ENCODE measurements at regions of chr4 and their contacts with region 1.

Region 1: DNA sequence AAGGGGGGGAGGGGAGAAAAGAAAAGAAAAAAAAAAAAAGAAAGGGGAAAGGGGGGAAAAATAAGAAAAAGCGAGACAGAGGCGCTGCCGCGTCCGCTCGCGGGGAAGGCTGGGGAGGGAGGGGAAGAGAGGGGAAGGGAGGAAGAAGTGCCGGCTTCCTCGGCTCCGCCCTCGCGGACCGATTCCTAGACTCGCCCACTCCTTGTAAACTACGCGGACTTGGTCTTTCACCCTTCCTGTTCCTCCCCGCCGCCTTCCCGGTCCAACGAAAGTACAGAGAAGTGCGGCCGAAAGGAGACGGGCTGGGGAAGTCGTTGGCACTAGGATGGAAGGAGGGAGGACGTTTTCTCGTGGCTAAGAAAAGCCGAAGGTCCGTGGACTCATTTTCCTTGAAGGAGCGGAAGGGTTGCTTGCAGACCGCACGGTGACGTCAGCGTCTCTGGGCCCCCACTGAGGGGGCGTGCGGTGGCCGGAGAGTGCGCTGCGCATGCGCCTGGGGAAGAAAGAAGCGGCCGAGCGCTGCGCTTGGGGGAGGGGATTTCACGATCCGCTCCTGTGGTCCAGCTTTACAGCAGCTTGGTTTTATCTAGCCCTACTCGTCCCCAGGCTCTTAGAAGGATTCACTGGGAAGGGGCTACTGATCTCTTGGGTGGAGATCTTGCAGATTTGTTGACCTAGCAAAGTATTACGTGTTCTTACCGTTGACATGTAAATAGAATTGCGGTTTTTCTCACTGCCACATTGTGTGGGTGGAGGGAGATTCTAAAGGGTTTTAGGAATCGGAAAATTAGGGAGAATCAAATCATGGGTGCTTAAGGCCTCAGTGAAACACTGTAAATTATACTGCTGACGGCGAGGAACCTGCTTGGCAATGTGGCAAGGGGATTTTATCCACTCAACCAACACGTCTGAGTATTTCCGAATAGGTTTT is at the start of gene CCNI:
- DNase-seq: peak; percentile 90 to 96 (median 95)
- ATAC-seq: peak; percentile 88
- H3K4me3 ChIP-seq: peak within 1 kb of the TSS; percentile 86
- H3K4me3 Mint-ChIP-seq: peak within 1 kb of the TSS in 4 of 10 donors; percentile 98 to 99 (median 99)
- H3K27ac ChIP-seq: peak within 1 kb of the TSS; percentile 98
- H3K27ac Mint-ChIP-seq: peak within 1 kb of the TSS in 5 of 9 donors; percentile 100
- H3K4me1 ChIP-seq: peaks cover 14 to 28% of the 10 kb centered on the region in 2 donors
- H3K4me1 Mint-ChIP-seq: peaks cover 28 to 54% (median 43%) of the 10 kb centered on the region in 7 donors
- H3K27me3 ChIP-seq: no peaks in the 10 kb centered on the region
- H3K27me3 Mint-ChIP-seq: peaks cover 0 to 7% (median 0%) of the 10 kb centered on the region in 5 donors
- total RNA-seq, gene CCNI: 206 to 393 (median 314) TPM

Region 2: GRCh38 chr4:75724066-75724866 is 1351.9 kb before region 1 on chr4 and contains the start of gene USO1:
- CTCF ChIA-PET with region 1: no interaction called
- POLR2A ChIA-PET with region 1: no interaction called
- intact Hi-C with region 1: loop called (anchors 1 kb)
- DNase-seq: peak; percentile 98 to 100 (median 99)
- ATAC-seq: peak; percentile 98
- H3K4me3 ChIP-seq: peak within 1 kb of the TSS; percentile 87
- H3K4me3 Mint-ChIP-seq: peak within 1 kb of the TSS; percentile 93 to 100 (median 100)
- H3K27ac ChIP-seq: peak within 1 kb of the TSS; percentile 91
- H3K27ac Mint-ChIP-seq: peak within 1 kb of the TSS; percentile 97 to 100 (median 99)
- H3K4me1 ChIP-seq: peaks cover 25 to 30% of the 10 kb centered on the region in 2 donors
- H3K4me1 Mint-ChIP-seq: peaks cover 32 to 60% (median 59%) of the 10 kb centered on the region in 7 donors
- H3K27me3 ChIP-seq: no peaks in the 10 kb centered on the region
- H3K27me3 Mint-ChIP-seq: peaks cover 0 to 4% (median 0%) of the 10 kb centered on the region in 5 donors
- total RNA-seq, gene USO1: 17.8 to 54.8 (median 35.0) TPM

Region 3: DNA sequence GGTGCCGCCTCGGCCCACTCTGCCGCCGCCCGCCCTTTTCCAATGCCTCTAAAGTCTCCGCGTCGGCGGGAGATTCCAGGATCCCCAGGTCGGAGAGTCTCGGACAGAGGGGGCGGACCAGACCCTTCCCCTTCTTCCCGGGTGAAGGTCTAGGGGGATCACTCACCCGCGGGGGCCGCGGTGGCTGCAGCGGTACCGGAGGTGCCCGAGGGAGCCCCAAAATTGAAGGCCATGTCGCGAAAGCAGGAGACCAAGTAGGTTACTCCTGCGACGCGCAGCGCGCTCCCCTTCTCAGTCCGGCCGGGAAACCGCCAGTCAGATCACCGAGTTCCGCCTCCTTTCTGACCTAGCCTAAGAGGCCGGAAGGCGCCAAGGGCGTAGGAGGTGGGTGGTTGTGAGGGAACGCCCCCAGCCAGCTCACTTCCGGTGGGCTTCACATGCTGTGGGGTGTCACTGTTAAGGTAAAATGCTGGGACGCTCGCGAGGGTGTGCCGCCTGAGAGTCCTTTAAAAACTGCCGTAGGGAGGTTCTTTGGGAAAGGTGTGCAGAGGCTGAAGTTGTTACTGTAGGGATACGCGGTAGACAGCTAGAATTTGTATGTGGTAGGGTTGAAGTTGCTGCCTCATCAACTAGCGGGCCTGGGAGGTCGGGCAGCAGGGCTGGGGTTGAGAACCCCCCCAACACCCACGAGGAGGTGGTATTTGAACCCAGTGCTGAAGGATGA is 927.8 kb before region 1 on chr4 and contains the start of gene NUP54:
- CTCF ChIA-PET with region 1: no interaction called
- POLR2A ChIA-PET with region 1: interaction called, 4 read pairs
- intact Hi-C with region 1: loop called (anchors 1 kb)
- DNase-seq: peak; percentile 85 to 96 (median 92)
- ATAC-seq: peak; percentile 99
- H3K4me3 ChIP-seq: peak within 1 kb of the TSS; percentile 85
- H3K4me3 Mint-ChIP-seq: peak within 1 kb of the TSS; percentile 90 to 100 (median 96)
- H3K27ac ChIP-seq: peak within 1 kb of the TSS; percentile 93
- H3K27ac Mint-ChIP-seq: peak within 1 kb of the TSS; percentile 91 to 99 (median 94)
- H3K4me1 ChIP-seq: peaks cover 12% of the 10 kb centered on the region in 2 donors
- H3K4me1 Mint-ChIP-seq: peaks cover 21 to 52% (median 45%) of the 10 kb centered on the region in 7 donors
- H3K27me3 ChIP-seq: no peaks in the 10 kb centered on the region
- H3K27me3 Mint-ChIP-seq: no peaks in the 10 kb centered on the region
- total RNA-seq, gene NUP54: 51.1 to 82.0 (median 65.5) TPM

Region 4: GRCh38 chr4:76993787-76994641 is 82.1 kb before region 1 on chr4:
- CTCF ChIA-PET with region 1: interaction called, 3 read pairs
- POLR2A ChIA-PET with region 1: interaction called, 5 read pairs
- intact Hi-C with region 1: loop called (anchors 1 to 2 kb)
- DNase-seq: peak in 8 of 9 donors; percentile 42 to 90 (median 86)
- ATAC-seq: peak; percentile 82
- H3K4me3 ChIP-seq: peak overlapping the region; percentile 52
- H3K4me3 Mint-ChIP-seq: peak overlapping the region; percentile 56 to 94 (median 79)
- H3K27ac ChIP-seq: peak overlapping the region; percentile 19
- H3K27ac Mint-ChIP-seq: peak overlapping the region; percentile 73 to 97 (median 84)
- H3K4me1 ChIP-seq: peaks cover 28 to 50% of the 10 kb centered on the region in 2 donors
- H3K4me1 Mint-ChIP-seq: peaks cover 39 to 84% (median 59%) of the 10 kb centered on the region in 7 donors
- H3K27me3 ChIP-seq: no peaks in the 10 kb centered on the region
- H3K27me3 Mint-ChIP-seq: peaks cover 0 to 27% (median 0%) of the 10 kb centered on the region in 5 donors

Region 5: GRCh38 chr4:77095101-77095821 is 19.1 kb after region 1 on chr4:
- CTCF ChIA-PET with region 1: interaction called, 6 read pairs
- POLR2A ChIA-PET with region 1: interaction called, 7 read pairs
- intact Hi-C with region 1: loop called (anchors 1 kb)
- DNase-seq: peak; percentile 46 to 67 (median 59)
- ATAC-seq: peak; percentile 98
- H3K4me3 ChIP-seq: no peak overlapping the region
- H3K4me3 Mint-ChIP-seq: no peak overlapping the region
- H3K27ac ChIP-seq: no peak overlapping the region
- H3K27ac Mint-ChIP-seq: no peak overlapping the region
- H3K4me1 ChIP-seq: peaks cover 0 to 2% of the 10 kb centered on the region in 2 donors
- H3K4me1 Mint-ChIP-seq: peaks cover 8 to 20% (median 16%) of the 10 kb centered on the region in 7 donors
- H3K27me3 ChIP-seq: no peaks in the 10 kb centered on the region
- H3K27me3 Mint-ChIP-seq: no peaks in the 10 kb centered on the region

Region 6: DNA sequence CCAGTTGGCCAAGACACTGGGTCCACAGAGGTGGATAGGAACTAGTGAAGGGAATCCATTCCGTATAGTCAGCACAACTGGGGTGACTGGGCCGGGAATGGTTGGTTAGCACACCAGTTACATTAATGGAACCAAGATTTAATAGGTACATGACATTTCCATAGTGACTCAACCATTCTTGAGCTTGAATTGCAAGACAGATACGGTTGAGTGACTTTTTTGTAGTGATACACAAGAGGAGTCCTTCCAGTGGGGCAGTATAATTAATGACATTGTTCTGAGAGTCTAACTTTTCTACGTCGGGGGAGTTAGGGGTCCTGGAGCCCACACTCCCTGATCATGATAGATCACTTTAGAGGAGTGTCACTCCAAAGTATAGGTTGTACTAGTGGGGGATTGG is 317.9 kb after region 1 on chr4:
- CTCF ChIA-PET with region 1: no interaction called
- POLR2A ChIA-PET with region 1: no interaction called
- intact Hi-C with region 1: no loop called
- DNase-seq: no peak
- ATAC-seq: no peak
- H3K4me3 ChIP-seq: no peak overlapping the region
- H3K4me3 Mint-ChIP-seq: no peak overlapping the region
- H3K27ac ChIP-seq: no peak overlapping the region
- H3K27ac Mint-ChIP-seq: no peak overlapping the region
- H3K4me1 ChIP-seq: no peaks in the 10 kb centered on the region
- H3K4me1 Mint-ChIP-seq: no peaks in the 10 kb centered on the region
- H3K27me3 ChIP-seq: no peaks in the 10 kb centered on the region
- H3K27me3 Mint-ChIP-seq: peaks cover 6 to 13% (median 8%) of the 10 kb centered on the region in 5 donors

Region 7: DNA sequence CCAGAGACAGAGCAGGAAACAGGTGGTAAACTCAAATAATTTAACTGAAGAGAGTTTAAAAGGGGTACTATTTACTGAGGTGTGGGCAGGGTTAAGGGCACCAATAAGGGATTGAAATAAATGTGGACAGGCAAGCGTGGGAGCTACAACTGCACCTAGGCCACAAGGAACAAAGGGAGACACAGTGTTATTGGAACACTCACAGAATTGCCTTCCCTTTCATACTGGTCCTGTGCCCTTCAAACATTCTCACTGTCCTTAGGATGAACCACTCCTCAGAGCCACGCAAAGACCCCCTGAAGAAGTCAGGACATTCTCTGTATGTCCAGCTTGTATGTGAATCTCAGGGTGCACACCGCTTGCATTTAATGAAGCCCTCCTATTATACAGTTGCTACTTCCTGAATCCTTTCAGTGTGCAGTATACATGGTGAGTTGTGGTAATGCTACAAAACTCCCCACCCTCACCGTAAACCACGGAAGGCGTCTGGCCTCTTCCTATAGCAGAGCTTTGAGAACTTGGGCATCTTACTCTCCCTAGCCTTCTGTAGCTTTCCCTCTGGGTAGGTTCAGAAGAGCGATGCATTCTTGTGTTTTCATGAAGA is 776.9 kb after region 1 on chr4:
- CTCF ChIA-PET with region 1: no interaction called
- POLR2A ChIA-PET with region 1: no interaction called
- intact Hi-C with region 1: loop called in 1 of 2 experiments (anchors 2 kb)
- DNase-seq: peak; percentile 22 to 79 (median 70)
- ATAC-seq: peak; percentile 91
- H3K4me3 ChIP-seq: peak overlapping the region; percentile 50
- H3K4me3 Mint-ChIP-seq: peak overlapping the region; percentile 72 to 93 (median 80)
- H3K27ac ChIP-seq: peak overlapping the region; percentile 77
- H3K27ac Mint-ChIP-seq: peak overlapping the region; percentile 95 to 100 (median 98)
- H3K4me1 ChIP-seq: peaks cover 53 to 57% of the 10 kb centered on the region in 2 donors
- H3K4me1 Mint-ChIP-seq: peaks cover 45 to 62% (median 60%) of the 10 kb centered on the region in 7 donors
- H3K27me3 ChIP-seq: no peaks in the 10 kb centered on the region
- H3K27me3 Mint-ChIP-seq: no peaks in the 10 kb centered on the region